T-cell (primary cell): ENCODE measurements at regions of chr18 and their contacts with region 1.

Region 1: DNA sequence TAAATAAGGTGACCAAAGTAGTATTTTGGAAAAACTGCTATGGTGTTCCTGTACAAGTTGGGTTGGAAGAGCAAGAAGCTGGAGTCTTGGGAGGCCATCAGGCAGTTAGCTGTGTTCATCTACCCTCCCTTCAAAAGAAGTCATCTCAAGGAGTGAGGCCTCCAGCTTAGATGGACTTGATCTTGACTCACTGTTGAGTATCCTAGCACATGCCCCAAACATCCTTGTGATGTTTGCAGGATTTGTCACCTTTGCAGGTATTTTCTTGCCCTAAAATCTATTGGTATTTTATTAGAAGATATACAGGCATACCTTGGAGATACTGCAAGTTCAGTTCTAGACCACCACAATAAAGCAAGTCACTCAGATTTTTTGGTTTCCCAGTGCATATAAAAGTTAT is 30.2 kb downstream of the RNMT start:
- DNase-seq: no peak
- ATAC-seq: no peak
- H3K4me3 ChIP-seq: no peak overlapping the region
- H3K4me3 Mint-ChIP-seq: no peak overlapping the region
- H3K27ac ChIP-seq: no peak overlapping the region
- H3K27ac Mint-ChIP-seq: no peak overlapping the region
- H3K4me1 ChIP-seq: no peaks in the 10 kb centered on the region
- H3K4me1 Mint-ChIP-seq: no peaks in the 10 kb centered on the region
- H3K27me3 ChIP-seq: no peaks in the 10 kb centered on the region
- H3K27me3 Mint-ChIP-seq: no peaks in the 10 kb centered on the region

Region 2: GRCh38 chr18:11980555-11981382 is 1775.9 kb before region 1 on chr18:
- CTCF ChIA-PET with region 1: no interaction called
- POLR2A ChIA-PET with region 1: interaction called in 1 of 2 experiments, 10 read pairs
- DNase-seq: peak; percentile 82 to 96 (median 89)
- ATAC-seq: peak; percentile 90 to 94 (median 92)
- H3K4me3 ChIP-seq: peak overlapping the region; percentile 60 to 64
- H3K4me3 Mint-ChIP-seq: peak overlapping the region; percentile 79 to 84 (median 82)
- H3K27ac ChIP-seq: no peak overlapping the region
- H3K27ac Mint-ChIP-seq: peak overlapping the region; percentile 52 to 58
- H3K4me1 ChIP-seq: peaks cover 0 to 17% of the 10 kb centered on the region in 2 experiments
- H3K4me1 Mint-ChIP-seq: peaks cover 0 to 15% (median 12%) of the 10 kb centered on the region in 3 donors
- H3K27me3 ChIP-seq: peaks cover 0 to 9% of the 10 kb centered on the region in 2 experiments
- H3K27me3 Mint-ChIP-seq: no peaks in the 10 kb centered on the region